Activated naive CD4-positive, alpha-beta T cell treated with anti-CD3 and anti-CD28 coated beads, Interleukin-2, amount 10 ng/mL, durations not matched to agents 7 days and 5 days (primary cell): ENCODE measurements at regions of chr5 and their contacts with region 1.

Region 1: DNA sequence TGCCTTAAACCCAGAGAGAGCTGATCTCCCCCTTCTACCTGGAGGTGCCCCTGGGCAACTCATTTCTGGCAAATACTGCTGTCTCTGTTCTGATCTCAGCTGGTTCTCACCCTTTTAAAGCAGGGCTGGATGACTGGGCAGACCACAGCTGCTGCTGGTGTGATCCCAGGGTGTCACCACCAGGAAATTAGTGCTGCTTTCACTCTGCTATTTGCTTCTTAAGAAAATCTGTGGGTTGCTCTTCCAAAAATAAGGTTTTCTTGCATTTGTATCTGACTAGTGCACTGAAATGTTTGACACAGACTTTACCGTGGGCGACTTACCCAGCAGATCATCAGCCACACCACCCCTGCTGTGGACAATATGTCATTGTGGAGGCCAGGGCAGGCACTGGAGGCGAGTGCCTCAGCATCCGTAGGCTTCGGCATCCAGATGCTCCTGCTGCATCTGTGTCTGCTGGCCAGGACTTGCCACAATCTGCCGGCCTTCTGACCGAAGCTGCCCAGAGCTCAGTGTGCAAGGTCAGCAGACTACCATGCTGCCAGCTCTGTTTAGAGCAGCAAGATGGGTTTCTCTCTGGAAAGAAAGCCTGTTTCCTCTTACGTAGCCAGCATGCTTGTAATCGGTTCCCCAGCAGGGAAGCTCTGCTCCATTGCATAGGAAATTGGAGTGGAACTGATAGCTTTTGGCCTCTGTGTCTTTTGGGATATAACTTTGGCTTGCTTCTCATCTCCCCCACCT is 13.6 kb downstream of the ARHGAP26 start:
- DNase-seq: peak; percentile 41
- H3K4me3 Mint-ChIP-seq: no peak overlapping the region
- H3K27ac Mint-ChIP-seq: peak overlapping the region; percentile 35
- H3K4me1 Mint-ChIP-seq: peaks cover 51% of the 10 kb centered on the region
- H3K27me3 Mint-ChIP-seq: no peaks in the 10 kb centered on the region

Region 2: GRCh38 chr5:142800776-142801494 is 17.2 kb after region 1 on chr5:
- CTCF ChIA-PET with region 1: interaction called, 47 read pairs
- DNase-seq: peak; percentile 72
- H3K4me3 Mint-ChIP-seq: peak overlapping the region; percentile 41
- H3K27ac Mint-ChIP-seq: peak overlapping the region; percentile 98
- H3K4me1 Mint-ChIP-seq: peaks cover 64% of the 10 kb centered on the region
- H3K27me3 Mint-ChIP-seq: no peaks in the 10 kb centered on the region

Region 3: DNA sequence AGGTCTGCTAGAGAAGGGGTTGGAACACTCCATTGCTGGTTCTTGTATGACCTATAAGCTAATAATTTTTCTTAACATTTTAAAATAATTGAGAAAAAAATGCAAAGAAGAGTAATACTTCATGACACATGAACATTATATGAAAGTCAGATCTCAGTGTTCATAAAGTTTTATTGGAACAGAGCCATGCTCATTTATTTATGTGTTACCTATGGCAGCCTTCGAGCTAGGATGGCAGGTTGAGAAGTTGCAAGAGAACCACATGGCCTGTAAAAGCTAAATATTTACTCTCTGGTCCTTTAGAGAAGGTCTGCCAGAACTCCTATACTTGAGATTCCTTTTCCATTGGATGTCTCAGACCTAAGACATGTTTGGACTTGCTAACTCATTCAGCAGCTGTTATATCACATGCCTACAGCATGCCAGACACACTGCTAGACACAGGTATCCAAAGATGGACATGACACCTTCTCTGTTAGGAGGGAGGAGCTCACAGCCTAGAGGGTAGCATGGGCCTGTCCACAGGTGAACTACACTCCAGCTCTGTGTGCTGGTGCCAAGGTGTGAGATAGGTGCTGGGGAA is 290.7 kb after region 1 on chr5:
- CTCF ChIA-PET with region 1: no interaction called
- DNase-seq: no peak
- H3K4me3 Mint-ChIP-seq: no peak overlapping the region
- H3K27ac Mint-ChIP-seq: no peak overlapping the region
- H3K4me1 Mint-ChIP-seq: no peaks in the 10 kb centered on the region
- H3K27me3 Mint-ChIP-seq: no peaks in the 10 kb centered on the region